Dorsolateral prefrontal cortex (tissue), 120 donors: ENCODE measurements at regions of chr21 and their contacts with region 1.

Region 1: DNA sequence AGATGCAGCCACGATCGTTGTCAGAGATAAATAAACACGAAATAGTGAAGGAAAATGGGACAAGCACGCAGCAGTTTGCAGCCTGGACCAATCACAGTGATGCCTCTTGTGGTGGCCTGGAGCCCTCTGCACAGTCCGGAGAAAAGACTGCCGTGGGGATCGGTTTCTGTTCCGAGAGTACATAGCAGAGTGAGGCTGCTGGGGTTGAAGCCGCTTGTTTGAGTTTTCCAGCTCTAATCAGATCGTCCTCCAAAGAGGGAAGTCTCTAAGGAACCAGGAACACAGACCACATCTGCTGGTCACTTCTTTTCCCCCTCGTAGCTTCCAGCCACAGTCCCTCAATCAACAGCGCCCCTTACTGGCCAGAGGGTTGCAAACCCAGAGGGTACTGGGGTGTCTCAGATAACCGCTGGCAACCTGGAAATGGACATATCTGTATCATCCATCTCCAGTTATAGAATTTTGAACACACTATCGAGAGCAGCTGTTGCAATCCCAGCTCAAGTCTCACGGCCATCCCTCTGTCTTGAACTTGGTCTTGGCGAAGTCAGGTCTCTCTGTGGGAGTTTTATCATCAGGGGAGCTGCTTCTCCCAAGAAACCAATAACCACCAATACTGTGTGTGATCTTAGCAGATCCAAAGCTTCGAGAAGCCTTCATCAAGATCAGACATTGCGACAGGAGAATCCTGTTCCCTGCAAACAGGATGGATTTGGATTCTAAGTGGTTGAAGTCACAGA is 57.4 kb downstream of the OLIG1 start:
- DNase-seq: peak; percentile 27 to 85 (median 77)
- H3K4me3 ChIP-seq: peak overlapping the region; percentile 12 to 68 (median 48)
- H3K27ac ChIP-seq: peak overlapping the region; percentile 66 to 99 (median 90)
- H3K27me3 ChIP-seq: peaks cover 0 to 21% (median 0%) of the 10 kb centered on the region in 45 donors
- CTCF ChIP-seq: peak; percentile 38 to 97 (median 86)

Region 2: GRCh38 chr21:32626621-32627196 is 500.6 kb before region 1 on chr21:
- intact Hi-C with region 1: no loop called
- DNase-seq: no peak
- H3K4me3 ChIP-seq: no peak overlapping the region
- H3K27ac ChIP-seq: no peak overlapping the region
- H3K27me3 ChIP-seq: peaks cover 0 to 3% (median 0%) of the 10 kb centered on the region in 45 donors
- CTCF ChIP-seq: no peak

Region 3: GRCh38 chr21:32834916-32835235 is 292.4 kb before region 1 on chr21:
- intact Hi-C with region 1: loop called (anchors 2 to 5 kb)
- DNase-seq: peak in 2 of 10 donors; percentile 19 to 43
- H3K4me3 ChIP-seq: peak overlapping the region in 16 of 59 donors; percentile 1 to 42 (median 14)
- H3K27ac ChIP-seq: peak overlapping the region in 56 of 59 donors; percentile 1 to 82 (median 66)
- H3K27me3 ChIP-seq: no peaks in the 10 kb centered on the region
- CTCF ChIP-seq: no peak

Region 4: GRCh38 chr21:32940079-32941014 is 187.0 kb before region 1 on chr21:
- intact Hi-C with region 1: loop called (anchors 2 to 5 kb)
- DNase-seq: peak in 4 of 10 donors; percentile 19 to 59 (median 34)
- H3K4me3 ChIP-seq: peak overlapping the region in 14 of 59 donors; percentile 3 to 45 (median 29)
- H3K27ac ChIP-seq: peak overlapping the region in 11 of 59 donors; percentile 8 to 64 (median 45)
- H3K27me3 ChIP-seq: peaks cover 0 to 13% (median 0%) of the 10 kb centered on the region in 45 donors
- CTCF ChIP-seq: peak; percentile 48 to 95 (median 82)

Region 5: GRCh38 chr21:33025489-33026442 is 101.6 kb before region 1 on chr21 and contains the start of gene OLIG2:
- intact Hi-C with region 1: loop called (anchors 1 to 2 kb)
- DNase-seq: peak; percentile 46 to 96 (median 95)
- H3K4me3 ChIP-seq: peak within 1 kb of the TSS; percentile 35 to 82 (median 61)
- H3K27ac ChIP-seq: peak within 1 kb of the TSS; percentile 40 to 93 (median 86)
- H3K27me3 ChIP-seq: peaks cover 0 to 100% (median 92%) of the 10 kb centered on the region in 45 donors
- CTCF ChIP-seq: peak in 1 of 56 donors; percentile 17
- total RNA-seq, gene OLIG2: 13.9 to 165 (median 45.4) TPM

Region 6: GRCh38 chr21:33059380-33059841 is 67.9 kb before region 1 on chr21:
- intact Hi-C with region 1: no loop called
- DNase-seq: no peak
- H3K4me3 ChIP-seq: no peak overlapping the region
- H3K27ac ChIP-seq: peak overlapping the region in 44 of 59 donors; percentile 3 to 82 (median 60)
- H3K27me3 ChIP-seq: peaks cover 0 to 17% (median 2%) of the 10 kb centered on the region in 45 donors
- CTCF ChIP-seq: no peak

Region 7: GRCh38 chr21:33185852-33186251 is 58.5 kb after region 1 on chr21:
- intact Hi-C with region 1: loop called in 1 of 2 experiments (anchors 5 kb)
- DNase-seq: no peak
- H3K4me3 ChIP-seq: no peak overlapping the region
- H3K27ac ChIP-seq: no peak overlapping the region
- H3K27me3 ChIP-seq: peaks cover 0 to 7% (median 0%) of the 10 kb centered on the region in 45 donors
- CTCF ChIP-seq: no peak